MCF 10A (cell line): ENCODE measurements at regions of chr4 and their contacts with region 1.

Region 1: GRCh38 chr4:143389579-143390195 is 53.0 kb downstream of the GAB1 start:
- DNase-seq: peak; percentile 60
- H3K4me3 Mint-ChIP-seq: peak overlapping the region; percentile 5
- H3K27ac Mint-ChIP-seq: peak overlapping the region; percentile 69
- H3K4me1 Mint-ChIP-seq: peaks cover 25% of the 10 kb centered on the region
- H3K27me3 Mint-ChIP-seq: no peaks in the 10 kb centered on the region
- CTCF ChIP-seq: no peak

Region 2: DNA sequence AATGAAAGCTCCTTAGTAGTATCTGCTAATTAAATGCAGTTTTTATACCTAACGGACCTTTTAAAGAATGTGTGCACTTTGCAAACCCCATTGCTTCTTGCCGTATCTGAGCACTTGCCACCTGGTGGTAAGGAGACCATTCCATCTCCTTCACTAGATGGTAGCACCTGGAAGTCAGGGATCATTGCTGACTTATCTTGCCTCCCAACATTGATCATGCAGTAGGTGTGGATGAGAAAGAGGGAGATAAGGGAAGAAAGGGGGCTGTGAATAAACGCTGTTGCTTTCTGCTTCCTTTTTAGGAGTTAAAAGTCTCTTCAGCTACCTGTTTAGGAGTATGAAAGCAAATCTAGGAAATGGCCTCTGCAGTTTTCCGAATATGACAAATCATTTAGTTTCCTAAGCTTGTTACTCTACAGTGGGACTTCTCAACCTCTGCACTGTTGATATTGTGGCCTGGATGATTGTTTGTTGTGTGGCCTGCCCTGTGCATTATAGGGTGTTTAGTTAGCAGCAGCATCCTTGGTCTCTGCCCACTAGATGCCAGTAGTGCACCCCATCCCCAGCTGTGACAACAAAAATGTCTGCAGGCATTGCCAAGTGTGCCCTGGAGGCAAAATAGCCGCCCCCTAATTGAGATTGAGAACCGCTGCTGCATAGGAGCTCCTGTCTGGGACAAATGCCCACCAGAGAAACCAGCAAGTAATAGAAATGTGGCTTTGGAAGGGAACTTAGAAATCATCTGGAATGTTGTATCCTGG is 14.2 kb before region 1 on chr4:
- CTCF ChIA-PET with region 1: interaction called, 21 read pairs
- POLR2A ChIA-PET with region 1: interaction called, 6 read pairs
- intact Hi-C with region 1: no loop called
- DNase-seq: peak; percentile 34
- H3K4me3 Mint-ChIP-seq: no peak overlapping the region
- H3K27ac Mint-ChIP-seq: no peak overlapping the region
- H3K4me1 Mint-ChIP-seq: peaks cover 12% of the 10 kb centered on the region
- H3K27me3 Mint-ChIP-seq: no peaks in the 10 kb centered on the region
- CTCF ChIP-seq: peak; percentile 38